AG04449 (cell line): ENCODE measurements at regions of chr6 and their contacts with region 1.

Region 1: GRCh38 chr6:112087136-112087911 is at the starts of genes FAM229B and TUBE1:
- DNase-seq: peak; percentile 93
- H3K4me3 ChIP-seq: peak within 1 kb of the TSS; percentile 85
- CTCF ChIP-seq: peak; percentile 7

Region 2: GRCh38 chr6:111291336-111292259 is 795.7 kb before region 1 on chr6:
- CTCF ChIA-PET with region 1: no interaction called
- POLR2A ChIA-PET with region 1: no interaction called
- DNase-seq: no peak
- H3K4me3 ChIP-seq: no peak overlapping the region
- CTCF ChIP-seq: no peak

Region 3: GRCh38 chr6:112076200-112076599 is 11.1 kb before region 1 on chr6:
- CTCF ChIA-PET with region 1: interaction called, 51 read pairs
- POLR2A ChIA-PET with region 1: interaction called, 3 read pairs
- DNase-seq: no peak
- H3K4me3 ChIP-seq: no peak overlapping the region
- CTCF ChIP-seq: no peak

Region 4: GRCh38 chr6:112128208-112128607 is 40.9 kb after region 1 on chr6:
- CTCF ChIA-PET with region 1: interaction called, 11 read pairs
- POLR2A ChIA-PET with region 1: no interaction called
- DNase-seq: no peak
- H3K4me3 ChIP-seq: no peak overlapping the region
- CTCF ChIP-seq: no peak

Region 5: GRCh38 chr6:112144145-112144926 is 57.0 kb after region 1 on chr6:
- CTCF ChIA-PET with region 1: interaction called, 15 read pairs
- POLR2A ChIA-PET with region 1: interaction called, 3 read pairs
- DNase-seq: no peak
- H3K4me3 ChIP-seq: peak overlapping the region; percentile 21
- CTCF ChIP-seq: no peak